Cardiac septum (tissue), 1 donor: ENCODE measurements at regions of chr12 and their contacts with region 1.

Region 1: DNA sequence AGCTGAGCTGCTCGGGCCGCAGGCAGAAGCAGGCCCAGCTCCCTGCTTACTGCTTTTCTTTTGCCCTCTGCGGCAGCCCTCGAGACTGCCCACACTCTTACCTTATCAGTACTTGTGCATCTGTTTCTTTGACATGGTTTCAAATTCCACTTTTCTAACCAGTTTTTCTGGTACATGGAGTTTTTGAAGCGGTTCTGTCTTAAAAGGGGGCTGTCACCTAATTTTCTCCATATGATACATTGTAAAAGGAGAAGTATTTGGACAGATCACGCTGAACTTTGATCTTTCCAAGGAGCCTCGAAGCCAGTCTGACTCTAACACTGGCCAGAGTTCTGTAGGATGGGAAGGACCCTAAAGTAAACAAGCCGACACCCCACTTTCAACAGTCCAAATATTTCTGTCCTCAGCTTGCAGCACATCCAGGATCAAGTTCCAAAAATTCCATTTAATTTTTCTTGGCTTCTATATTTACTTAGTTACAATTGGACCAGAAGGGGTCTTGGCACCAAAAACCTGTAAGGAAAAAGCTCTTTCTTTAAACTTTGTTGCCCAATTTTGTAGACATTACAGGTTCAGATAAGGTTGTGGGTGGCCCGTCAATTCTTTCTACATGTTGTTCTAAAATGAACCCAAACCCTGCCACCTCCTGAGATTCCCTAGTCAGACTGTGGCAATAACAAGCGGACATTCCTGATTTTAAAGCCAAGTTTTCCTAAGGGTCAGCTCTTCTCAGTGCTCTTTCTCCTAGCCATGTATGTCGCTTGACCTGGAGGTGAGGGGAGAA is 44.8 kb upstream of the GSG1 start:
- DNase-seq: no peak

Region 2: GRCh38 chr12:13100882-13101769 is 47.1 kb before region 1 on chr12:
- intact Hi-C with region 1: loop called (anchors 5 kb)
- DNase-seq: peak; percentile 94

Region 3: DNA sequence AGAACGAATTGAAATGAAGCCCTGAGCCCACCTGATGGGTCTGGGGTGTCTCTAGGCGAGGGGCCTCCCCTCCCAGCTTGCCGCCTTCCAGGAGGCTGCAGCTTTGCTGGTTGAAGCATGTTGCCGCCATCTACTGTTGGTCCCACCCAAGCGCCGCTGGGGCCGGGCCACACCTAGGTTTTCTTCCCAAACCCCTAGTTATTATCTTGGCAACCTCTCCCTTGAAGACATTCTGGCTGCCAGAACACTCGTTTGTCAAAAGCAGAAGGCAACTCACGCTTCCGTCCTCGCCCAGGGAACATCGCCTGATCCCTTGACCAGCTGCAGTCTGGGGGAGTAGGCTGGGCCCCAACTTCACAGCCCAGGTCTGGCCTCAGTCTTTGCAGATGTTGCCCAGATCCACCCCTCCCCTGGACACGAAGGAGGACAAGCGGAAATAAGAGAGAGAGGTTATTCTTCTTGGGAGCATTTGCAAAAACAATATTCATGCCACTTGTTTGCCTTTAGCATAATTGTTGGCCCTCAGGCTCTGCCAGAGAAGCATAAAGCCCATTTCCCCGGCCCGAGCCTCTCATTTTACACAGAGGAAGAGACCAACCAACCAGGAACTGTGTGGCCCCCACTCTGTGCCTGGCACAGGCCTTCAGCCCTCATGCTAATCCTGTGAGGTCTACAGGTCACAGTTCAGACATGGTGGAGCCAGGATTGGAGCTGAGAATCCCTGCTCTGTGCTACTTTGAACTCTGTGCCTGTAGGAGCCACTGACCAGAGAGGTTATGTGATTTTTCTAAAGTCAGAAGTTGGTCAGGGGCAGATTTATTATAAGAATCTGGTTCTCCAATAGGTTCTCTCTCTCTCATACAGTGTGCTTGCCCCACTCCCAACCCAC is 55.0 kb after region 1 on chr12:
- intact Hi-C with region 1: loop called (anchors 2 kb)
- DNase-seq: no peak